Dorsolateral prefrontal cortex (tissue), 120 donors: ENCODE measurements at regions of chr19 and their contacts with region 1.

Region 1: GRCh38 chr19:40889366-40889765 is 7.3 kb upstream of the CYP2A7 start:
- DNase-seq: no peak
- H3K4me3 ChIP-seq: no peak overlapping the region
- H3K27ac ChIP-seq: no peak overlapping the region
- H3K27me3 ChIP-seq: no peaks in the 10 kb centered on the region
- CTCF ChIP-seq: no peak

Region 2: GRCh38 chr19:40928850-40929249 is 39.5 kb after region 1 on chr19:
- intact Hi-C with region 1: loop called in 1 of 2 experiments (anchors 2 kb)
- DNase-seq: no peak
- H3K4me3 ChIP-seq: no peak overlapping the region
- H3K27ac ChIP-seq: no peak overlapping the region
- H3K27me3 ChIP-seq: peaks cover 0 to 4% (median 0%) of the 10 kb centered on the region in 45 donors
- CTCF ChIP-seq: no peak

Region 3: DNA sequence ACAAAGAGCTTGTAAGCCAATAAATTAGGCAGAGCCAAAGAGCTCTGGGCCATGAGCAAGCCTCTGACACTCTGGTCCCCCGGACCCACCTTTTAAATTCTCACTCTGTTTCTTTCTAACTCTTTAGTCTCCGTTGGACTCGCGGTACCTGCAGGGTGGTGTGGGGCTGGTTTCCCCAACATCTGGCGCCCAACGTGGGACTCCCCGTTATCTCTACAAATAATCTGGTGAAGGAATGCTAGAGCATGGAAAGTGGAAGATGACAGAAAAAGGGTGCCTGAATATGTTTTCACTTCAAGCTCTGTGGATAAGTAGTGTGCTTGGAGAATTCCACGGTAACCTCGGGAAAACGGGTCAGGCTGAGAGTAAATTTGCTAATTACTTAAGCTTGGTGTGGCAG is 65.2 kb after region 1 on chr19:
- intact Hi-C with region 1: no loop called
- DNase-seq: no peak
- H3K4me3 ChIP-seq: no peak overlapping the region
- H3K27ac ChIP-seq: no peak overlapping the region
- H3K27me3 ChIP-seq: no peaks in the 10 kb centered on the region
- CTCF ChIP-seq: no peak